Naive thymus-derived CD8-positive, alpha-beta T cell (primary cell): ENCODE measurements at regions of chr1 and their contacts with region 1.

Region 1: GRCh38 chr1:40385437-40386358 is 12.2 kb downstream of the SMAP2 start:
- DNase-seq: peak; percentile 26 to 95 (median 86)
- ATAC-seq: peak; percentile 75
- H3K4me3 Mint-ChIP-seq: peak overlapping the region; percentile 78 to 97 (median 86)
- H3K27ac Mint-ChIP-seq: peak overlapping the region; percentile 97 to 100 (median 99)
- H3K4me1 Mint-ChIP-seq: peaks cover 52 to 96% (median 86%) of the 10 kb centered on the region in 4 donors
- H3K27me3 Mint-ChIP-seq: no peaks in the 10 kb centered on the region

Region 2: DNA sequence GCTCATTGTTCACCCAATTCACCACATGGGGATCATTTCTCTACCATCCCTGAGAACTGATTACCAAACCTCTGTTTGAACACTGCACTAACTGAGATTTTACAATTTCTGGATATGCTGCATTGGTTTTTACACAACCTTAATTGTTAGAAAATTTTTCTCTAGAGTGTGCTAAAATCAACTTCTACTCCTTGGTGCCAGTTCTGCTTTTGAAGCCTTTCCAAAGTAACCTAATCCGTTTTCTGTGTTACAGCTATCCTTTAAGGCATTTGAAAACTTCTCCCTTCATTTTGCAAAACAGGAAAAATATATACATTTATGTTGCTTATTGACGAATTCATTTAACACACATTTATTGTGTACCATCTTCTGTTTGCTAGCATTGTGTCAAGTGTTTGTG is 11.6 kb after region 1 on chr1:
- POLR2A ChIA-PET with region 1: interaction called, 384 read pairs
- DNase-seq: no peak
- ATAC-seq: no peak
- H3K4me3 Mint-ChIP-seq: peak overlapping the region; percentile 10 to 84 (median 68)
- H3K27ac Mint-ChIP-seq: peak overlapping the region; percentile 78 to 99 (median 95)
- H3K4me1 Mint-ChIP-seq: peaks cover 42 to 96% (median 88%) of the 10 kb centered on the region in 4 donors
- H3K27me3 Mint-ChIP-seq: no peaks in the 10 kb centered on the region

Region 3: DNA sequence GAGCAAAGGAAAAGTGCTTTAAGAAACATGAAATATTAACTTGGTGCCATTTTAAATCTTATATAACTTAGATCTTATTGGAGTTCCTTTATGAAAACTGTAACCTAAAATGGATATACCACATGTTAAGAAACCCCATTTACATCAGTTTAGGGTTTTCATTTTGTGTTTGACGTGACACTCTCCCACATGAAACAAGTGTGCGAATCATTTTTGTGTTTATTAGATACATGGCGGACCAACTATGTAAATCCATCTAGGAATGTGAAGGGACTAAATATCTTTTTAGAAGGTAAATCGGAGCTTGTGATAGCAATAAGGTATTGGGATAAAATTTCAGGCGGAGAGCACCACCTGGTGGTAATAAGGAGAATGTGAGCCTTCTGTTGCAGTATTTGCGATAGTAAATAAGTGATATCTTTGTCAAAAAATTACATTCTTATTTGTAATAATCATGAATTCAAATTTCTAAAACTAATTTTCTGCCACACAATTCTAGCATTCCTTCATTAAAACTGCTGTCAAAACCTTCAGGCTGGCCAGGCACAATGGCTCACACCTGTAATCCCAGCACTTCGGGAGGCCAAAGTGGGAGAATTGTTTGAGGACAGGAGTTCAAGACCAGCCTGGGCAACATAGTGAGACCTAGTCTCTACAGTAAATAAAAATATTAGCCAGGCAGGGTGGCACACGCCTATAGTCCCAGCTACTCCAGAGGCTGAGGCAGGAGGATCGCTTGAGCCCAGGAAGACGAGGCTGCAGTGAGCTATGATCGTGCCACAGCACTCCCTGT is 19.2 kb after region 1 on chr1:
- POLR2A ChIA-PET with region 1: interaction called, 50 read pairs
- DNase-seq: peak in 8 of 10 donors; percentile 36 to 86 (median 54)
- ATAC-seq: peak; percentile 73 to 90
- H3K4me3 Mint-ChIP-seq: peak overlapping the region; percentile 12 to 83 (median 65)
- H3K27ac Mint-ChIP-seq: peak overlapping the region; percentile 87 to 99 (median 96)
- H3K4me1 Mint-ChIP-seq: peaks cover 28 to 81% (median 72%) of the 10 kb centered on the region in 4 donors
- H3K27me3 Mint-ChIP-seq: no peaks in the 10 kb centered on the region